ENCODE measurements at regions of chr10 and their contacts with region 1.

Region 1: GRCh38 chr10:70223728-70224127 is 9.5 kb downstream of the PPA1 start:
- DNase-seq: no peak
- H3K4me3 ChIP-seq: no peak overlapping the region
- H3K27ac ChIP-seq: no peak overlapping the region
- H3K4me1 ChIP-seq: peaks cover 4% of the 10 kb centered on the region
- H3K27me3 ChIP-seq: no peaks in the 10 kb centered on the region
- CTCF ChIP-seq: no peak

Region 2: GRCh38 chr10:70363971-70364771 is 140.4 kb after region 1 on chr10:
- intact Hi-C with region 1: loop called (anchors 2 kb)
- DNase-seq: peak; percentile 89
- H3K4me3 ChIP-seq: no peak overlapping the region
- H3K27ac ChIP-seq: peak overlapping the region; percentile 58
- H3K4me1 ChIP-seq: no peaks in the 10 kb centered on the region
- H3K27me3 ChIP-seq: no peaks in the 10 kb centered on the region
- CTCF ChIP-seq: peak; percentile 85

Region 3: GRCh38 chr10:70672165-70673042 is 448.7 kb after region 1 on chr10 and contains the start of gene ADAMTS14:
- intact Hi-C with region 1: no loop called
- DNase-seq: no peak
- H3K4me3 ChIP-seq: peak within 1 kb of the TSS; percentile 26
- H3K27ac ChIP-seq: peak within 1 kb of the TSS; percentile 55
- H3K4me1 ChIP-seq: no peaks in the 10 kb centered on the region
- H3K27me3 ChIP-seq: peaks cover 12% of the 10 kb centered on the region
- CTCF ChIP-seq: no peak
- total RNA-seq, gene ADAMTS14: 0.93 to 1.5 TPM

Measured in colonic mucosa (tissue), 4 donors.